Dendritic cell treated with granulocyte-macrophage colony-stimulating factor and Interleukin-4, amounts not matched to agents 40 ng/mL and 50 ng/mL, for 4 days (primary cell): ENCODE measurements at regions of chr15 and their contacts with region 1.

Region 1: GRCh38 chr15:40367686-40368611 is 9.9 kb downstream of the DISP2 start:
- H3K4me3 Mint-ChIP-seq: peak overlapping the region; percentile 73
- H3K27ac Mint-ChIP-seq: peak overlapping the region; percentile 69
- H3K4me1 Mint-ChIP-seq: peaks cover 39% of the 10 kb centered on the region
- H3K27me3 Mint-ChIP-seq: peaks cover 15% of the 10 kb centered on the region

Region 2: DNA sequence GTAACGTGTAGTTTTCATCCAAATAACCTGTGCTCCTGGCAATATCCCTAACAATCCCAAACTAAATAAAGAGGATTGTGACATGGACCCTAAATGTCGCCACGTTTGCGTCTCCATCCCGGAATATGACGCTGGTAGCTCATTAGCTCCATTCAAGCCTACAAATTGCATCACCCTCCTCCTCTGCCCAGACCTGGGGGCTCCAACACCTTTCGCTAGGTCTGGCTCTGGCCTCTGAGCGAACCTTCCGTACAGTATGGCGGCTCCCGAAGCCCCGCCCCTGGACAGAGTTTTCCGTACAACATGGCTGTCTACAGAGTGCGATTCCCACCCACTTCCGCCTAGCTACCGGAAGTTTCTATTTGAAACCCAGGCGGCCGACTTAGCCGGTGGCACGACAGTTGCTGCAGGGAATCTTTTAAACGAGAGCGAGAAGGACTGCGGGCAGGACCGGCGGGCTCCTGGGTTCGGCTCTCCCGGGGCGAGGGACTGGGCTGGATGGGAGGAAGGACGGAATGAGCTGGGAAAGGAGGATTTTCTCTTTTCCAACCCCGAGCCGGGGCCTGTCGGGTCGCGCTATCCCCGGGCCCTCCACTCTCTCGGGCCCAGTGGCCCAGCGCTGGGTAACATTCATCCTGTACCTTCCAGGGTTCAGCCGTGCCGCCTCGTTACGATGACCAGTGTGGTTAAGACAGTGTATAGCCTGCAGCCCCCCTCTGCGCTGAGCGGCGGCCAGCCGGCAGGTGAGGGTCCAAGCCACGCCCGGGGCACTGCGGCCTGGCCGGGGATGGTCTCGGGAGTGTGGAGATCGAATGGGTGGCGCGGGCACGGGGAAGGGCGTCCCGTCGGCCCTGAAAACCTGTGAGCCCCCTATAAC is 14.9 kb after region 1 on chr15 and contains the start of gene KNSTRN:
- intact Hi-C with region 1: loop called (anchors 2 kb)
- H3K4me3 Mint-ChIP-seq: peak within 1 kb of the TSS; percentile 90
- H3K27ac Mint-ChIP-seq: peak within 1 kb of the TSS; percentile 90
- H3K4me1 Mint-ChIP-seq: peaks cover 46% of the 10 kb centered on the region
- H3K27me3 Mint-ChIP-seq: no peaks in the 10 kb centered on the region

Region 3: DNA sequence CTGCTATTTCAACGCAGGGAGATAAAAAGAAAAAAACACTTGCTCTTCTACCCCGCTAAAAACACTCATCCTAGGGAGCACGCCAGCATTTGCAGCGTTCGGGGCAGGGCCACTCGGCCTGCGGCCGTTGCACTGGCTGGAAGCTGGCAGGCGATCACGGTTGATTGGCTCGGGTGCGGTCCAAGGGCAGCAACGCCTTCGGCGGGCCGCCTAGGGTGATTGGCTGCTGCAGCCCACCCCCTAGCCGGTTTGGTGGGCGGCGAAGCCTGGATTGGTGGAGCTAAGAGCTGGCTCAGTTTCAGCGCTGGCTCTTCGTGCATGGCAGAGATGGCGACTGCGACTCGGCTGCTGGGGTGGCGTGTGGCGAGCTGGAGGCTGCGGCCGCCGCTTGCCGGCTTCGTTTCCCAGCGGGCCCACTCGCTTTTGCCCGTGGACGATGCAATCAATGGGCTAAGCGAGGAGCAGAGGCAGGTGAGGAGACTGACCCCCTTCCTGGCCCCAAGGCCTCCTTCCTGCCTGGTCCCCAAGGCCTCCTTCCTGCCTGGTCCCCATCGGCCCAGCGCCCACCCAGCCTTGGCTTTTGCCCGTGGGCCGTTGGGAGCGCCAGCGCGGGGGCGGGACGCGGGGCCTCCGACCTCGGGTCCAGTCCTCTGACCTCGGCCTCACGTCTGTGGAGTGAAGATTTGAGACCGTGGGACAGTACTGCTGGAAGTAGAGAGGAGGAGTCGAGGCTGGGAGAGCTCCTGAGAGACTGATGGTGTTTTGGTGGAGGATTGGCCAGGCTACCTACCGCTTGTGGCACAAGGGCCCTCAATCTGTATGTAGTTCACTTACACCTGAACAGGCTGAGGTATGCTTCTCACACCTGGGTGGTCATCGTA is 37.8 kb after region 1 on chr15 and contains the start of gene IVD:
- intact Hi-C with region 1: loop called (anchors 1 kb)
- H3K4me3 Mint-ChIP-seq: peak within 1 kb of the TSS; percentile 88
- H3K27ac Mint-ChIP-seq: peak within 1 kb of the TSS; percentile 86
- H3K4me1 Mint-ChIP-seq: peaks cover 31% of the 10 kb centered on the region
- H3K27me3 Mint-ChIP-seq: no peaks in the 10 kb centered on the region